Natural killer cell (primary cell): ENCODE measurements at regions of chr16 and their contacts with region 1.

Region 1: DNA sequence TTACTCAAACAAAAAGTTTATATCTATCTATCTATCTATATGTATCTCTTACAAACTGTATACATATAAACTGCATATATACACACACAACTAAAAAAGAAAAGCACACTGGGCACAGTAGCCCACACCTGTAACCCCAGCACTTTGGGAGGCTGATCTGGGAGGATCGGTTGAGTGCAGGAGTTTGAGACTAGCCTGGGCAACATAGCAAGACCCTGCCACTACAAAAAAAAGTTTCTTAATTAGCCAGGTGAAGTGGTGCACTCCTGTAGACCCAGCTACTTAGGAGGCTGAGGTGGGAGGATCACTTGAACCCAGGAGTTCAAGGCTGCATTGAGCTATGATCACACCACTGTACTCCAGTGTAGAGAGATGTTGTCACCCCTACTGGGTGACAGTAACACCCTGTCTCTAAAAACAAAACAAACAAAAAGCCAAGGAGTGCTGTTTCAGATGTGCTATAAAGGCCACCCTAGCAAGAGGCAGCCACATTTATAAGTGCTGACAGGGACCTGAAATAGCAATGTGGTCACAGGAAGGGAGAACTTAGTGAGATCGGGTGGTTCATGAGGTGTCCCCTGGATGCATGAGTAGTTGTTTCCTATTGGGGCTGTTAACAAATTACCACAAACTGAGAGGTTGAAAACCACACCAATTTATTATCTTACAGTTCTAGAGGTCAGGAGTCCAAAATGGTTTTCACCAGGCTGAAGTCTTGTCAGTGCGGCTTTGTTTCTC is 4.8 kb downstream of the CD2BP2 start:
- DNase-seq: peak; percentile 52 to 63
- ATAC-seq: peak; percentile 68 to 76 (median 74)
- H3K4me3 ChIP-seq: no peak overlapping the region
- H3K4me3 Mint-ChIP-seq: peak overlapping the region; percentile 70
- H3K27ac ChIP-seq: peak overlapping the region; percentile 82
- H3K27ac Mint-ChIP-seq: peak overlapping the region; percentile 88 to 94
- H3K4me1 ChIP-seq: peaks cover 61% of the 10 kb centered on the region
- H3K4me1 Mint-ChIP-seq: peaks cover 58 to 63% of the 10 kb centered on the region in 2 donors
- H3K27me3 ChIP-seq: no peaks in the 10 kb centered on the region
- H3K27me3 Mint-ChIP-seq: no peaks in the 10 kb centered on the region
- CTCF ChIP-seq: no peak

Region 2: GRCh38 chr16:30335598-30336474 is 14.5 kb before region 1 on chr16:
- intact Hi-C with region 1: loop called (anchors 1 kb)
- DNase-seq: peak in 1 of 2 donors; percentile 67
- ATAC-seq: peak in 1 of 3 donors; percentile 10
- H3K4me3 ChIP-seq: peak overlapping the region; percentile 45
- H3K4me3 Mint-ChIP-seq: peak overlapping the region; percentile 92
- H3K27ac ChIP-seq: peak overlapping the region; percentile 65
- H3K27ac Mint-ChIP-seq: peak overlapping the region; percentile 86 to 89
- H3K4me1 ChIP-seq: peaks cover 17% of the 10 kb centered on the region
- H3K4me1 Mint-ChIP-seq: peaks cover 16% of the 10 kb centered on the region in 2 donors
- H3K27me3 ChIP-seq: no peaks in the 10 kb centered on the region
- H3K27me3 Mint-ChIP-seq: no peaks in the 10 kb centered on the region
- CTCF ChIP-seq: no peak

Region 3: GRCh38 chr16:30370444-30371247 is 20.3 kb after region 1 on chr16 and contains the start of gene TBC1D10B:
- intact Hi-C with region 1: loop called (anchors 1 kb)
- DNase-seq: peak; percentile 96 to 99
- ATAC-seq: peak; percentile 82 to 94 (median 82)
- H3K4me3 ChIP-seq: peak within 1 kb of the TSS; percentile 64
- H3K4me3 Mint-ChIP-seq: peak within 1 kb of the TSS; percentile 93
- H3K27ac ChIP-seq: peak within 1 kb of the TSS; percentile 70
- H3K27ac Mint-ChIP-seq: peak within 1 kb of the TSS; percentile 91 to 94
- H3K4me1 ChIP-seq: peaks cover 35% of the 10 kb centered on the region
- H3K4me1 Mint-ChIP-seq: peaks cover 48 to 59% of the 10 kb centered on the region in 2 donors
- H3K27me3 ChIP-seq: no peaks in the 10 kb centered on the region
- H3K27me3 Mint-ChIP-seq: peaks cover 0 to 3% of the 10 kb centered on the region in 2 donors
- CTCF ChIP-seq: no peak
- total RNA-seq, gene TBC1D10B: 43.0 to 55.3 (median 50.2) TPM

Region 4: DNA sequence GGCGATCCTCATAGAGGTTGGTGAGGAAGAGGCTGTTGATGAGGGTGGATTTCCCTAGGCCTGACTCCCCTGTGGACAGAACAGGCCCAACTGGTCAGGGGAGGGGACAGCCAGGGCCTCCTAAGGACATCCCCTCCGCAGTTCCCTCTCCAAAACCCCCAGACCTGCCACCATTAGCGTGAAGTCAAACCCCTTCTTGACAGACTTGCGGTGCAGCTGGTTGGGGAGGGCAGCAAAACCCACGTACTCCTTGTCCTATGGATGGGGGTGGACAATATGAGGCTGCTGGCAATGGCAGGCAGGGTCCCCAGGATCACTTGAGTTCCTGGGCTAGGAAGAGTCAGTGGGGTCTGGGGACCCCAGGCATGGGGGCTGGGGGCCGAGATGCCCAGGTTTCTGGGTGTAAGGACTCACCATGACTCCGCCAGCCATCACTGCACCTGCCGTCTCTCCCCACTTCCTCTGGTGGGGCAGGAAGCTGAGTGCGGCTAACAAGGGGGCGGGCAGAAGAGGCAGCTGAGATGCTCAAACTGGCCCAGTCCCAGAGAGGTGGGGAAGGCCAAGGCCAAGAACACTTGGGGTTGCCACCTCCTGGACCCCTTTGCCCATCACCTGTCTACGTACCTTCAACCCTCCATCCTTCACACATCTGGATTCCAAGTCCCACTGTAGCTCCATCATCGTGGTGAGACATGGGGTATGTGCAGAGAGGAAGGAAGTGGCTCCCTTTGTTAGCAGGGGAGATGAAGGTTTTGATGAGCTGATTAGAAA is 32.0 kb after region 1 on chr16 and contains the start of gene SEPTIN1:
- intact Hi-C with region 1: no loop called
- DNase-seq: peak; percentile 70 to 88
- ATAC-seq: peak; percentile 38 to 50 (median 41)
- H3K4me3 ChIP-seq: peak within 1 kb of the TSS; percentile 55
- H3K4me3 Mint-ChIP-seq: peak within 1 kb of the TSS; percentile 84
- H3K27ac ChIP-seq: peak within 1 kb of the TSS; percentile 82
- H3K27ac Mint-ChIP-seq: peak within 1 kb of the TSS; percentile 99 to 100
- H3K4me1 ChIP-seq: peaks cover 66% of the 10 kb centered on the region
- H3K4me1 Mint-ChIP-seq: peaks cover 53 to 59% of the 10 kb centered on the region in 2 donors
- H3K27me3 ChIP-seq: no peaks in the 10 kb centered on the region
- H3K27me3 Mint-ChIP-seq: no peaks in the 10 kb centered on the region
- CTCF ChIP-seq: no peak
- total RNA-seq, gene SEPTIN1: 196 to 210 (median 205) TPM

Region 5: DNA sequence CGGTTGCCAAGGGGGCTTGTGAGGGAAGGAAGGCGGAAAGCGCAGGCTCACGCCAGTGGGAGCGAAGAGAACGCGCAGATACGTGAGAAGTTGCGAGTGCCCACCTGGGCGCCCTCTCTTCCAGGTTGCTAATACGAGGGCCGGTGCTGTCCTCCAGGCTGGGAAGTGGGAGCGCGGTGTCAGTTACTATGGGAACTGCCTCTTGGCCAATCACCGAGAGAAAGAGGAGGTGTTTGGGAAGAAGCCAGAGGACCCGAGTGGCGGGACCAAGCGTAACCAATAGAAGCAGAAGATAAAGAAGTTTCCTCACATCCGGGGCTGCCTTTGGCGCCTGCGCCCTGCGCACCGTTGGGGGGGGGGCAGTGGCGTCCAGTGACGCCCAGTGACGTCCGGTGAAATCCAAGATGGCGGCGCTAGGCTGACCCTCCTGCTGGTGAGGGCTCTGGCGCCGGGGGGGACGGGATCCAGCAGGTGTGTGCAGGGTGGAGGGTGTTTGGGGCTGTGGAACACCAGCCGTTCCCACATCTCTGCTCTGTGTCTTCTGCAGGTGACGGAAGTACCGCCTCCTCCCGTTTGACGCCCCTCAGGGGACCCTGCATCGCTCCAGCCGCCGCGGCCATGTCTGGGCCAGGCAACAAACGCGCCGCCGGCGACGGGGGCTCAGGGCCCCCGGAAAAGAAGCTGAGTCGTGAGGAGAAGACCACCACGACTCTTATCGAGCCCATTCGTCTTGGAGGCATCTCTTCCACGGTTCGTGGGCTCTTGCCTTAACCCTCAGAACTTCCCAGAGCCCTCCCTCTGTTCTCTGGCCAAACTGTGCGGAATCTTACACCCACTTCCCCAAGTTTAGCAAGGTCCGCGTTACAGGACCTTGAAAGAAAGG is 411.9 kb after region 1 on chr16 and contains the starts of genes CFAP119 and RNF40:
- intact Hi-C with region 1: no loop called
- DNase-seq: peak; percentile 84 to 95
- ATAC-seq: peak; percentile 94 to 97 (median 95)
- H3K4me3 ChIP-seq: peak within 1 kb of the TSS; percentile 80
- H3K4me3 Mint-ChIP-seq: peak within 1 kb of the TSS; percentile 95
- H3K27ac ChIP-seq: peak within 1 kb of the TSS; percentile 77
- H3K27ac Mint-ChIP-seq: peak within 1 kb of the TSS; percentile 92
- H3K4me1 ChIP-seq: peaks cover 57% of the 10 kb centered on the region
- H3K4me1 Mint-ChIP-seq: peaks cover 35 to 55% of the 10 kb centered on the region in 2 donors
- H3K27me3 ChIP-seq: no peaks in the 10 kb centered on the region
- H3K27me3 Mint-ChIP-seq: no peaks in the 10 kb centered on the region
- CTCF ChIP-seq: no peak
- total RNA-seq, gene CFAP119: 3.4 to 5.1 (median 4.9) TPM
- total RNA-seq, gene RNF40: 153 to 167 (median 161) TPM